Left ventricle myocardium inferior (tissue), 1 donor: ENCODE measurements at regions of chr12 and their contacts with region 1.

Region 1: DNA sequence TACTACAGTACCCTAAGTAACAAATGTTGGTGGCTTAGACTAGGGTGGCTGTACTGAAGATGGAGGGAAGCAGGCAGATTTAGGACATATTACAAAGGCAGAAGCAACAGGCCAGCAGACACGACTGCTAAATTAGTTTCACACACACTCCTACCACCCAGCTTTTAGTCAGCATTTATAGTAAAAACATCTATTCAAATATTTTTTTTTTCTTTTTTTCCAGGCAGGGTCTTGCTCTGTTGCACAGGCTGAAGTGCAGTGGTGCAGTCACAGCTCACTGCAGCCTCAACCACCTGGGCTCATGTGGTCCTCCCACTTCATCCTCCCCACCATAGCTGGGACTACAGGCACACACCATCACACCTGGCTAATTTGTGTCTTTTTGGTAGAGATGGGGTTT is 72.9 kb downstream of the CDK17 start:
- DNase-seq: no peak
- H3K4me3 ChIP-seq: no peak overlapping the region
- H3K27ac ChIP-seq: no peak overlapping the region
- H3K4me1 ChIP-seq: peaks cover 27% of the 10 kb centered on the region
- H3K27me3 ChIP-seq: no peaks in the 10 kb centered on the region
- CTCF ChIP-seq: no peak

Region 2: GRCh38 chr12:96294831-96295230 is 32.5 kb before region 1 on chr12:
- intact Hi-C with region 1: loop called (anchors 5 kb)
- DNase-seq: no peak
- H3K4me3 ChIP-seq: no peak overlapping the region
- H3K27ac ChIP-seq: no peak overlapping the region
- H3K4me1 ChIP-seq: no peaks in the 10 kb centered on the region
- H3K27me3 ChIP-seq: no peaks in the 10 kb centered on the region
- CTCF ChIP-seq: no peak

Region 3: DNA sequence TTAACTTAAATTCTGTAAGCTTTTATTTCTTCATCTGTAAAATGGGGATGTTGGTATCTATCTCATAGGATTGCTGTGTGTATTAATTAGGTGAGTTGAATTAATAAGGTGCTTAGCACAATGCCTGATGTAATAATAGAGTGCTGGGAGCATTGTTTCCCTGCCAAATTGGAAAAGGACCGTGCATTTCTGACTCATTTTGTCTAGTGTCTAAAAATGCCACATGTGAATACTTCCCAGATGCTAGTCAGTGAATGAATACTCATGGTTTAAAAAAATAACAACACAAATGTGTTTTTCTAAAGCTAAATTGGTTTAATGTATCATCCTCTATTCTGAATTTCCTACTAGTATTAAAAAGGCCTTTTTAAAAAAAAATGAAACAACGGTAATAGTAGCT is 534.3 kb after region 1 on chr12:
- intact Hi-C with region 1: no loop called
- DNase-seq: no peak
- H3K4me3 ChIP-seq: no peak overlapping the region
- H3K27ac ChIP-seq: no peak overlapping the region
- H3K4me1 ChIP-seq: no peaks in the 10 kb centered on the region
- H3K27me3 ChIP-seq: peaks cover 3% of the 10 kb centered on the region
- CTCF ChIP-seq: no peak